ENCODE measurements at regions of chr20 and their contacts with region 1.

Region 1: GRCh38 chr20:3820048-3820900 is at the start of gene AP5S1:
- DNase-seq: no peak
- H3K4me3 ChIP-seq: peak within 1 kb of the TSS; percentile 95
- CTCF ChIP-seq: peak; percentile 83

Region 2: GRCh38 chr20:3390759-3391500 is 429.3 kb before region 1 on chr20:
- CTCF ChIA-PET with region 1: no interaction called
- POLR2A ChIA-PET with region 1: no interaction called
- DNase-seq: no peak
- H3K4me3 ChIP-seq: no peak overlapping the region
- CTCF ChIP-seq: no peak

Region 3: DNA sequence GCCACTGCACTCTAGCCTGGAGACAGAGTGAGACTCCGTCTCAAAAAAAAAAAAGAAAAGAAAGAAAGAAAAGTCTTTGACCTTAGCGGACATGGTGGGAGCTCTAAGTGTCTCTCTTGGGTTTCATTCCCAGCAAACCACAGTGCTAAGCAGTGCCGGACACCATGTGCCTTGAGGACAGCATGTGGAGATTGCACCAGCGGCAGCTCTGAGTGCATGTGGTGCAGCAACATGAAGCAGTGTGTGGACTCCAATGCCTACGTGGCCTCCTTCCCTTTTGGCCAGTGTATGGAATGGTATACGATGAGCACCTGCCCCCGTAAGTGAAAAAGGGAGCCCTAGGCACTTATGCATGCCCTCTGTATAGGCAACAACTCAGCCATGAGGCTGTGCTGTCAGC is 236.5 kb before region 1 on chr20:
- CTCF ChIA-PET with region 1: no interaction called
- POLR2A ChIA-PET with region 1: no interaction called
- DNase-seq: no peak
- H3K4me3 ChIP-seq: no peak overlapping the region
- CTCF ChIP-seq: no peak

Region 4: DNA sequence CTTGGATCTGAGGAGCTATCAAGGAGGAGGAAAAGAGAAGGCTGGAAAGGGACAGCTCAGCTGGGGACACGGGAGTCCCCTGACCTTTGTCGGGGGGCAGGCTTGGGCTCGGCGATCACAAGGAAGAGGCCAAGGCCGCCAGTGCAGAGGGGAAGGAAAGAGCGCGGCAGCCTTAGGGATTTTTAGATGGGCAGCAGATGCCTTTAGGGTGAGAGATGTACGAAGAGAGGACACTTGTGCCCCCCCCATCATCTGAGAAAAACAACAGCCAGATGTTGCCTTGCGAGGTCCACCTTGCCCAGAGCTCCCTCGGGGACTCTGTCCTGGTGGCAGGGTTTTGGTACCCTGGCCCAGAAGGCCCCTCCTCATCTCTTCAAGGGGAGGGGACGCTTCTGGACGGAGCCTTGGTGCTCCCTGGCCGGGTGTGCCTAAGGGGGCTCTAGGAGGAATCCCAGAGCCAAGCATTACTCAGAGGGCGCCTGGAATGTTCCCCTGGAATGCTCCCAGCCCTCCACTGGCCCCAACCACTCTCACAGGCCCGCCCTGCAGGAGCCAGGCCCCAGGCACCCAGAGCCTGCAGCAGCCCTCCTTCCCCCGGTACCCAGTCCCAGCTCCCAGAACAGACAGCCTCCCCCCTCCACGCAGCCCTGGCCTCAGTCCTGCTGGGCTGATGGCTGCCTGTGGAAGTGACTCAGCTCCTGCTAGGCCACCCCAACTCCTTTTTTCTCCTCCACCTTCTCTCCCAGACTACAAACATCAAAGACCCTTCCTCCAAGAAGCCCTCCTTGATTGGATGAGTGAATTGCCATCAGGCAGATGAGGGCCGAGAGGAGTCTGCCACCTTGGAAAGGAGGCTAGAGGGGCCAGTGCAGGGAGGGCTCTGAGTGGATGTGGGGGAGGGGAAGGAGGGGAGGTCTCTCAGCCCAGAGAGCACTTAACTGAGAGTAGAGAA is 140.2 kb before region 1 on chr20:
- CTCF ChIA-PET with region 1: interaction called, 71 read pairs
- POLR2A ChIA-PET with region 1: interaction called, 4 read pairs
- DNase-seq: peak; percentile 57
- H3K4me3 ChIP-seq: peak overlapping the region; percentile 70
- CTCF ChIP-seq: no peak

Region 5: GRCh38 chr20:3760655-3761348 is 59.5 kb before region 1 on chr20:
- CTCF ChIA-PET with region 1: interaction called, 20 read pairs
- POLR2A ChIA-PET with region 1: interaction called, 4 read pairs
- DNase-seq: no peak
- H3K4me3 ChIP-seq: no peak overlapping the region
- CTCF ChIP-seq: no peak

Region 6: GRCh38 chr20:3781153-3781910 is 38.9 kb before region 1 on chr20 and contains the start of gene SPEF1:
- CTCF ChIA-PET with region 1: interaction called, 255 read pairs
- POLR2A ChIA-PET with region 1: interaction called, 12 read pairs
- DNase-seq: peak; percentile 59
- H3K4me3 ChIP-seq: peak within 1 kb of the TSS; percentile 60
- CTCF ChIP-seq: peak; percentile 68

Region 7: GRCh38 chr20:3795511-3796468 is 24.5 kb before region 1 on chr20 and contains the start of gene CDC25B:
- CTCF ChIA-PET with region 1: interaction called, 255 read pairs
- POLR2A ChIA-PET with region 1: interaction called, 12 read pairs
- DNase-seq: no peak
- H3K4me3 ChIP-seq: peak within 1 kb of the TSS; percentile 84
- CTCF ChIP-seq: peak; percentile 46

Region 8: DNA sequence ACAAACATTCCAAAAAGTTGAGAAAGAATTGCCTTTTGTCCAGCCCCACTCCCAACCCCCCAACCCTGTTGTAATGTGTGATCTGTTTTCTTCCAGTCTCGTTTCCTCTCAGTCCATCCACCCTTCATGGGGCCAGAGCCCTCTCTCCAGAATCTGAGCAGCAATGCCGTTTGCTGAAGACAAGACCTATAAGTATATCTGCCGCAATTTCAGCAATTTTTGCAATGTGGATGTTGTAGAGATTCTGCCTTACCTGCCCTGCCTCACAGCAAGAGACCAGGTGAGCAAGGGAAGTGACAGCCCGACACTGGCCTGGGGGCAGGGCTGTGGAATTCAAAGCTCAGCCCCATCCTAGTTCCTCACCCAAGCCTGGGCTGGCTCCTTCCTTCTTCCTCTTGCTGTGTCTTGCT is 34.2 kb after region 1 on chr20:
- CTCF ChIA-PET with region 1: interaction called, 15 read pairs
- POLR2A ChIA-PET with region 1: interaction called, 3 read pairs
- DNase-seq: no peak
- H3K4me3 ChIP-seq: no peak overlapping the region
- CTCF ChIP-seq: no peak

Region 9: GRCh38 chr20:4082406-4083097 is 262.3 kb after region 1 on chr20:
- CTCF ChIA-PET with region 1: interaction called, 11 read pairs
- POLR2A ChIA-PET with region 1: no interaction called
- DNase-seq: no peak
- H3K4me3 ChIP-seq: peak overlapping the region; percentile 2; the same call in 1 of the 2 replicates
- CTCF ChIP-seq: no peak